Spleen (tissue), 13 donors: ENCODE measurements at regions of chr11 and their contacts with region 1.

Region 1: GRCh38 chr11:36292311-36292722 is 3.1 kb upstream of the COMMD9 start:
- DNase-seq: no peak
- H3K4me3 ChIP-seq: no peak overlapping the region
- H3K27ac ChIP-seq: no peak overlapping the region
- H3K4me1 ChIP-seq: peaks cover 8 to 43% (median 31%) of the 10 kb centered on the region in 6 donors
- H3K27me3 ChIP-seq: no peaks in the 10 kb centered on the region
- CTCF ChIP-seq: peak; percentile 15 to 80 (median 63)
- POLR2A ChIP-seq: no peak

Region 2: DNA sequence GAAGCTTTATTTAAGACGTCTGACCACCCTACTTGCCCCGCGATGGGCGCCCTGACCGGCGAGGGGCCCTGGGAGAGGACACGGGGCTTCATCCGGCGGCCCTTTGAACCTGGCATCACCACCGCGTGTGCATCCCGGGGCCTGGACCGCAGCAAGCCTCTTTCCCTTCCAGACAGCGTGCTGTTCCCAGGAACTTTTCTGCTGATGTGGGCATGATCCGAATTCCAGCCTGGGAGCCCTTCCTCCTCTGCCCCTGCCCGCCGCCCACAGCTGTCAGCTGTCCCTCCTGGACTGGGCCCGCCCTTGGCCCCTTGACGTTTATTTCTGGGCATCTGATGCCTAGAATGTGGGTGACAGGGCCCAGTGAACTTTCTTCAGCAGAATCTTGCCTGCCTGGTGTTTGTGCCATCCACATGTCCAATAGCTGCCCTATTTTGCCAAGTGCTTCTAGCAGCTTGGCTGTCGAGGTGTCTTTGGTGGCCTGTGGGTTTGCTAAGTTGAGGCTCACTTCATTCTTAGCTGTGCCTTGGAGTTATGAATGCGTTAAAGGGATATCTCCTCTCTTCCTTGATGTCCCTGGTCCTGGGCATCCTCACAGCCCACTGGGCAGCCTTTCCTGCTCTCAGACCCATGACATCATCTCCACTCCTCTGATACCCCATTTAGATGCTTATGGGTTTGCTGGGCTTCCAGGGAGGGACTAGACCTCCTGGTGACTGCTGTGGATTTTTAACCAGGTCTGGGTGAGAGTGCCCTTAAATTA is 347.4 kb before region 1 on chr11:
- intact Hi-C with region 1: no loop called
- DNase-seq: no peak
- H3K4me3 ChIP-seq: peak overlapping the region; percentile 29 to 79 (median 46)
- H3K27ac ChIP-seq: peak overlapping the region in 6 of 8 donors; percentile 26 to 77 (median 54)
- H3K4me1 ChIP-seq: peaks cover 0 to 25% (median 16%) of the 10 kb centered on the region in 6 donors
- H3K27me3 ChIP-seq: peaks cover 0 to 45% (median 0%) of the 10 kb centered on the region in 7 donors
- CTCF ChIP-seq: no peak
- POLR2A ChIP-seq: no peak

Region 3: GRCh38 chr11:36116161-36116560 is 176.2 kb before region 1 on chr11:
- intact Hi-C with region 1: no loop called
- DNase-seq: no peak
- H3K4me3 ChIP-seq: no peak overlapping the region
- H3K27ac ChIP-seq: no peak overlapping the region
- H3K4me1 ChIP-seq: no peaks in the 10 kb centered on the region
- H3K27me3 ChIP-seq: no peaks in the 10 kb centered on the region
- CTCF ChIP-seq: no peak
- POLR2A ChIP-seq: no peak

Region 4: GRCh38 chr11:36478700-36479329 is 186.5 kb after region 1 on chr11:
- intact Hi-C with region 1: loop called (anchors 5 kb)
- DNase-seq: no peak
- H3K4me3 ChIP-seq: no peak overlapping the region
- H3K27ac ChIP-seq: no peak overlapping the region
- H3K4me1 ChIP-seq: peaks cover 0 to 21% (median 9%) of the 10 kb centered on the region in 6 donors
- H3K27me3 ChIP-seq: no peaks in the 10 kb centered on the region
- CTCF ChIP-seq: peak in 10 of 11 experiments; percentile 32 to 69 (median 55)
- POLR2A ChIP-seq: no peak

Region 5: GRCh38 chr11:36492724-36493304 is 200.5 kb after region 1 on chr11:
- intact Hi-C with region 1: loop called (anchors 5 kb)
- DNase-seq: no peak
- H3K4me3 ChIP-seq: no peak overlapping the region
- H3K27ac ChIP-seq: no peak overlapping the region
- H3K4me1 ChIP-seq: peaks cover 6 to 18% (median 12%) of the 10 kb centered on the region in 6 donors
- H3K27me3 ChIP-seq: no peaks in the 10 kb centered on the region
- CTCF ChIP-seq: peak; percentile 47 to 81 (median 73)
- POLR2A ChIP-seq: no peak

Region 6: GRCh38 chr11:36672813-36673450 is 380.6 kb after region 1 on chr11:
- intact Hi-C with region 1: loop called (anchors 10 kb)
- DNase-seq: no peak
- H3K4me3 ChIP-seq: no peak overlapping the region
- H3K27ac ChIP-seq: no peak overlapping the region
- H3K4me1 ChIP-seq: no peaks in the 10 kb centered on the region
- H3K27me3 ChIP-seq: no peaks in the 10 kb centered on the region
- CTCF ChIP-seq: peak; percentile 51 to 86 (median 77)
- POLR2A ChIP-seq: no peak